ENCODE measurements at regions of chr9 and their contacts with region 1.

Region 1: DNA sequence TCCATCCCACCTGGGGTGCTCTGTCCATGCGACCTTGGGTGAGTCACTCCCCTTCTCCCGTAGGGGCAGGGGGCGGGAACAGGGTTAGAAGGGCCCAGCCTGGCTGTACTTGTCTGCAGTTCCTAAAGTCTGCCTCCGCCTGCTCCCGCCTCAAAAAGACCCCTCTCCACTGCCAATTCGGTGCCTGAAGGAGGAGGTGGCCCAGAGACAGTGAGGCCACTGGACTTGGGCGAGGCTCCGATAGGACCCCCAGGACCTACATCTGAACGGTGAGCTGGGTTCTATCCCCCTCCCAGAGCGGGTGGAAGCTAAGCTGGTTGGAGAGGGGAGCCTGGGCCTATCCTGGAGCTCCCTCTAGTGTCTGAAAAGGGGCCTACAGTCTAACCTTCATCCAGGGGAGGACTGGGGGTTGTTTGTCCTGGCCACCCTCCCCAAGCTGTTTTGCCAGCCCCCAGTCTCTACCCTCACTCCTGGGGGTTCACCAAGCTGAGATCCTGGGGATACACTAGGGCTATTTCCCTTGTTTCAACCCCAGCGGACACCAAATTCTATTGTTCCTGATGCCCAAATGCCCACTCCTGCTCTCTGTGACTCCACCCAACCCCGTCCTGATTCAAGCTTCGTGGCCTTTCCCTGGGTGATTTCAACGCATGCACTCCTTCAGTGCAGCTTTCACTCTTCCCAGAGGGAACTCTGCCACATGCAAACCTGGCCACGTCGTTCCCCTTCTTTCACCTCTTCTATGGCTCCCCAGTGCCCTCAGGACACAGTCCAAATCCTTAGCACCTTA is 6.1 kb upstream of the CRB2 start:
- DNase-seq: no peak
- H3K4me3 ChIP-seq: no peak overlapping the region
- H3K27ac ChIP-seq: no peak overlapping the region
- H3K4me1 ChIP-seq: peaks cover 0 to 32% (median 26%) of the 10 kb centered on the region in 4 donors
- H3K27me3 ChIP-seq: peaks cover 0 to 7% (median 3%) of the 10 kb centered on the region in 3 donors
- CTCF ChIP-seq: peak; percentile 84 to 98 (median 89)
- EP300 ChIP-seq: no peak
- POLR2A ChIP-seq: no peak

Region 2: DNA sequence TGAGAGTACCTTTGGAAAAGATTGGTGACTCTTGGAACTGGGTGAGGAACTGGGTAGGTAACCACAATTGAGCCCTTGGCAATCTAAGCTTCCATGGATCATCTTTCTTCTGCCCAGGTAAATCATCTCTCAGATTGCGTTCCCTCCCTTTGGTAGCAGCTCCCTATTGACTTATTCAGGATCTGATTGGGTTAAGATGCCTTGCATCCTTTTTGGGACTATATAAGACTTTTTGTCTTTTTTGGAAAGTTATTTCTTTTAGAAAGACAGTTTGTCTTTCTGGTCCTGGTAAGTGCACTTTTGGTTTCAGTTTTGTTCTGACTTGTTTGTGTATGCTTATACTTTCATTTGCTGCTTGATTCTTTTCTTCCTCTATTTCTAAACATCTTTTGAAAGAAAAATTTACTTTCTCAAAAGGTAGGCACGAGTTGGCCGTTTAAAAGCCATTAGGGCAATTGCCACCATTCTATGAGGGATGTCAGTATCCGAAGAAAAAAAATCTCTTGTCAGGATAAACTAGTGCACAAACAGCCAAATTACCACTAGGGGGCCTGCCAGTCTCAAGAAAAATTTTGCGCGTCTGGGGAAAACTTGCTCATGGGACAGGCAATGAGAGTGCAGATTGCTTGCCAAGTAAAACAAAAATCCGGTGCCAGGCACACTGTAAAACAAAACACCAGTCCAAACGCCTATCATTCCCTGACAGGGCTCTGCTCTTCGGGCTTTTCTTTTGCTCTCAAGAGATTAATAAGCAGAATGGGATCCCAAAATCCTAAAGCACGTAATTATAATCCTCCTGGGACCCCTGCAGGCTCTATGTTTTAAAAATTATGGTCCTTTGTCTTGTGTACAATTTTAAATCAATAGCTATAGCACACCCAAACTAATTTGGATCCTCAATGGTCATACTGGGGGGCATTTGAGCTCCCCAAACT is 885.0 kb before region 1 on chr9:
- intact Hi-C with region 1: loop called (anchors 5 kb)
- DNase-seq: peak; percentile 91
- H3K4me3 ChIP-seq: peak overlapping the region; percentile 25 to 43 (median 42)
- H3K27ac ChIP-seq: peak overlapping the region in 3 of 4 donors; percentile 60 to 63 (median 62)
- H3K4me1 ChIP-seq: peaks cover 0 to 16% (median 14%) of the 10 kb centered on the region in 4 donors
- H3K27me3 ChIP-seq: no peaks in the 10 kb centered on the region
- CTCF ChIP-seq: peak; percentile 71 to 85 (median 80)
- EP300 ChIP-seq: no peak
- POLR2A ChIP-seq: no peak

Region 3: GRCh38 chr9:123011878-123012528 is 337.9 kb before region 1 on chr9:
- intact Hi-C with region 1: loop called (anchors 10 kb)
- DNase-seq: no peak
- H3K4me3 ChIP-seq: no peak overlapping the region
- H3K27ac ChIP-seq: no peak overlapping the region
- H3K4me1 ChIP-seq: peaks cover 0 to 9% (median 0%) of the 10 kb centered on the region in 4 donors
- H3K27me3 ChIP-seq: no peaks in the 10 kb centered on the region
- CTCF ChIP-seq: no peak
- EP300 ChIP-seq: no peak
- POLR2A ChIP-seq: no peak

Region 4: DNA sequence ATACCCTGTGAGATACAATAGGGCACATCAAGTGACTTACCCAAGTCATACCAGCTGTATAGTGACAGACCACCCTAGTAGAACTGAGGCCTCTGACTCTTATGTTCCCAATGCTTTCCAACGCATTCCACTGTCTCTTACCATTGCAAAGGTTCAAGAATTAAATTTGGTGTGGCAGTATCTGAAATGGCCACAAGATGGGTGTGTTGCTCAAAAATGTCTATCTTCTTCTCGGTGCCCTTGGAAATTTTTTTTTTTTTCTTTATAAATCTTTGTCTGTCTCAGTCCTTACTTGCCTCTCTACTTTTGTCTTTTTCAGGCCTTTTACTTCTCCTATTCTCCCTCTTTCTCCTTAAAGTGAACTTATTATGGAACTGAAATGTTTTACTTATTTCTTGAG is 268.1 kb before region 1 on chr9:
- intact Hi-C with region 1: loop called (anchors 1 kb)
- DNase-seq: no peak
- H3K4me3 ChIP-seq: no peak overlapping the region
- H3K27ac ChIP-seq: no peak overlapping the region
- H3K4me1 ChIP-seq: no peaks in the 10 kb centered on the region
- H3K27me3 ChIP-seq: no peaks in the 10 kb centered on the region
- CTCF ChIP-seq: peak; percentile 8 to 43 (median 38)
- EP300 ChIP-seq: no peak
- POLR2A ChIP-seq: no peak

Region 5: DNA sequence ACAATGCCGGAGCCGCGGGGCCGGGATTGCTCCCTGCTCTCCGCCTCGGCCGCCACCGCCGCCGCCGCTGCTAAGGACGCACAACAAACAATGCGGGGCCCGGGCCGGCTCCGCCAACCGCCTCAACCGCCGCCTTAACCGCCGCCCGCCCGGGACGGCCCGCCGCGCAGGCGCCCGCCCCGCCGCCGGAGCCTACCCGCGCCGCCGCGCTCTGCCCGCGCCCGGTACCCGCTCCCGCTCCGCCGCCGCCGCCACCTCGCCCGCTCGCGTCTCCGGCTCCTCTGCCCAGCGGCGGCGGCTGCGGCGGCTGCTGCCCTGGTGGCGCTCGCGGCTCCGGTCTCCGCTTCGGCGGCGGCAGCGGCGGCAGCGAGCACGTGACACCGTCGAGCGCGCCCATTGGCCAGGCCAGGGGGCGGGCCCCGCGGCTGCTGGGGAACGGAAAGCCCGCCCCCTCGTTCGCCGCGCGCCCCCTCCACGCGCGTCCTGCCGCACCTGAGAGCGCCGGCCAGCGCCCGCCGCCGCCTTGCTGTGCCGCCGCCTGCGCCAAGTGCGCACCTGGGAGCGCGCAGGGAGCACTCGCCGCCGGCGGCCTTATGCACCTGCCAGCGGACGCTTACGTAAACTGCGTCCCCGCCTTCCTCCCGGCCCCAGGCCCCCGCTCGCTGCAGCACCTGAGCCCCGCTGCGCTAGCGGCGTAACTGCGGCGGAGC is 81.5 kb before region 1 on chr9 and contains the start of gene STRBP:
- intact Hi-C with region 1: loop called (anchors 5 kb)
- DNase-seq: peak; percentile 92
- H3K4me3 ChIP-seq: peak within 1 kb of the TSS; percentile 61 to 94 (median 76)
- H3K27ac ChIP-seq: peak within 1 kb of the TSS; percentile 70 to 75 (median 72)
- H3K4me1 ChIP-seq: peaks cover 0 to 14% (median 13%) of the 10 kb centered on the region in 4 donors
- H3K27me3 ChIP-seq: no peaks in the 10 kb centered on the region
- CTCF ChIP-seq: no peak
- EP300 ChIP-seq: no peak
- POLR2A ChIP-seq: no peak
- total RNA-seq, gene STRBP: 13.3 to 18.2 (median 16.1) TPM

Region 6: DNA sequence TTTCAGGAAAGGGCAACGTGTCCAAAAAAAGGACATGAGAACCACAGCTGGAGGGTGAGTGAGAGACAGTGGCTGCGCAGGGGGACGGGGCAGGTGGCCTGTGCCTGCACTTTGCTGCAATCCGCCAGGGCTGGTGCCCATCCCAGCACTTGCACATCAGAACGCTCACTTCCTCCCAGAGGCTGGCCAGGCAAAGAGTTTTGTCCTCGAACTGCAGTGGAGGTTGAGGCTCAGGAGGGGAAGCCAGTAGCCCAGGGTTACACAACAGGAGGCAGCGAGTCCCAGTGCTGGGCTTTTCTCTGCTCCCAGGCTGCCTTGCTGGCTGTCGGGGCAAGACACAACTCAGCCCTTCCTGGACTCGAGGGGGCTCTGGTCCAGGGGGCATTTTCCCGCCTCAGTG is 39.2 kb after region 1 on chr9:
- intact Hi-C with region 1: loop called (anchors 1 kb)
- DNase-seq: no peak
- H3K4me3 ChIP-seq: no peak overlapping the region
- H3K27ac ChIP-seq: no peak overlapping the region
- H3K4me1 ChIP-seq: no peaks in the 10 kb centered on the region
- H3K27me3 ChIP-seq: no peaks in the 10 kb centered on the region
- CTCF ChIP-seq: no peak
- EP300 ChIP-seq: no peak
- POLR2A ChIP-seq: no peak